Common myeloid progenitor, CD34-positive (primary cell): ENCODE measurements at regions of chr1 and their contacts with region 1.

Region 1: DNA sequence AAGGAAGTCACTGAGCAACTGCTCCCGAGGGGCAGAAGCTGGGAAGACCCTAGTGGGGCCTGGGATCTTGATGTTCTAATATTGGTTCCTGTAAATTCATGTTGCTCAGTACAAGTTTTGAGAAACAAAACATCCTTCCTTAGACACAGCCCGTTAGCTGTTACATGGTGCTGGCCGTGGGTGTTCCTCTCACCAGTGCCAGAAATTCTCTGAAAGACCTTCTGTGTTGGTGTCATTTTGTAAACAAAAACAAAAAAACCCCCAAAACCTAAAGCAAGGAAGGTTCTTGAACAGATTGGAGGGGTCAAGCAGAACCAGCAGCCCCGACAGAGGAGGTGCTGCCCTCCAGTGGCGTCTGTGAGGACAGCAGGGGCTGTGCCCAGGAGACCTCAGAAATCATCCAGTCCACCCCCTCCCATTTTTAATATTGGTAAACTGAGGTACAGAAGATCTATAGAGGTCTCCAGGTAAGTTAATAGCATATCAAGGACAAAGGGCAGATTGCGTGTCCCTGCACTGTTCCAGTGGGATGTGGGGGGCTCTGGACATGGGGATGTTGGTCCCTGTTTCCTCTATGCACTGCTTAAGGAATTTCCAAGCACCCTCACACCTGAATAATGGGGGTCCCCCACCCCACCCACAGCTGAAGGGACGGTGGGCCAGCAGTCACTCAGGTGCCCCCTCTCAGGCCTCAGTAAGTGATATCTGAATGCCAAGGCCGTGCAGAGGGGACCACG is 38.2 kb downstream of the SLC2A7 start:
- DNase-seq: peak; percentile 38 to 63 (median 45)
- H3K4me3 ChIP-seq: peak overlapping the region in 2 of 7 experiments; percentile 11 to 13
- H3K27ac ChIP-seq: no peak overlapping the region
- H3K4me1 ChIP-seq: peaks cover 4 to 17% (median 8%) of the 10 kb centered on the region in 4 experiments
- H3K27me3 ChIP-seq: no peaks in the 10 kb centered on the region

Region 2: DNA sequence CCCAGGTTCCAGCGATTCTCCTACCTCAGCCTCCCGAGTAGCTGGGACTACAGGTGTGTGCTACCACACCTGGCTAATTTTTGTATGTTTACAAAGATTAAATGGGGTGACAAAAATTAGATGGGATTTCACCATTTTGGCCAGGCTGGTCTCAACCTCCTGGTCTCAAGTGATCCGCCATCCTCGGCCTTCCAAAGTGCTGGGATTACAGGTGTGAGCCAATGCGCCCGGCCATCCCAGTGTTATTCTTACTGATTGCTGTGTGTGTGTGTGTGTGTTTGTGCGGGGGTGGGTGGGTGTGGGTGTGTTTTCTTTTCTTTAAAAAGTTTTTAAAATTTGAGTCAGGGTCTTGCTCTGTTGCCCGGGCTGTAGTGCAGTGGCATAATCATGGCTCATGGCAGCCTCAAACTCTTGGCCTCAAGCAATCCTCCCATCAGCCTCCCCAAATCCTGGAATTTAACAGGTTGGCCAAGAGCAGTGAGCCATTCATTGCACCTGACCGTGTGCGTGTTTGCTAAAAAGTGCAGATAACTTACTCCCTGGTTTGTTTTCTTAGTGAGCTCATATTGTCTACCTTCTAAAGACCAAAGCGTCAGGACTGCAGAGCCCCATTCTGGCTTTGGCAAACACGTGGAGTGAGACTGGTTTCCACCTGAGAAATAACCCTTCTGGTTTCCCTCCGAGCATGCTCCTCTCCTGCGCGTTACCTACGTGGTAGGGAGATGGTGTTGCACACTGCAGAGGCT is 74.8 kb before region 1 on chr1:
- CTCF ChIA-PET with region 1: interaction called, 133 read pairs
- POLR2A ChIA-PET with region 1: interaction called, 5 read pairs
- DNase-seq: no peak
- H3K4me3 ChIP-seq: no peak overlapping the region
- H3K27ac ChIP-seq: no peak overlapping the region
- H3K4me1 ChIP-seq: peaks cover 0 to 1% (median under 1%) of the 10 kb centered on the region in 4 experiments
- H3K27me3 ChIP-seq: no peaks in the 10 kb centered on the region

Region 3: GRCh38 chr1:8926707-8927694 is 61.0 kb before region 1 on chr1:
- CTCF ChIA-PET with region 1: interaction called, 133 read pairs
- POLR2A ChIA-PET with region 1: interaction called, 3 read pairs
- DNase-seq: no peak
- H3K4me3 ChIP-seq: no peak overlapping the region
- H3K27ac ChIP-seq: no peak overlapping the region
- H3K4me1 ChIP-seq: peaks cover 4 to 19% (median 17%) of the 10 kb centered on the region in 4 experiments
- H3K27me3 ChIP-seq: no peaks in the 10 kb centered on the region

Region 4: DNA sequence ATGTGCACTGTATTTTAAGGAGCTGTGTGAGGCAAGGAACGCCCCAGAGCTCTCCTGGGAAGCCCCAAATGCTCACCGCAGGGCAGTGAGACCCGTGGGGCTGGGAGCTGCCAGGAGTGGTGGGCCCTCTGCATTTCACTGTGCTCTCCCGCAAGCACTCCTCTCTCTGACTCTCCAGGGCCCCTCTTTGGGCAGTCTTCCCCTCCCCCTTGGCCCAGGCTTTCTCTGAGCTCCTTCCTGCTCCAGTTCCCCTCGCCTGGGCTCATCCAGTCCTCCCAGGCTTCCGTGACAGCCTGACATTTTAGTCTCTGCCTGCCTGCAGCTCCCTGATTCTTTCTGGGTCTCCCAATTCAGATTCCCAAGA is 44.6 kb before region 1 on chr1:
- CTCF ChIA-PET with region 1: interaction called, 14 read pairs
- POLR2A ChIA-PET with region 1: interaction called, 3 read pairs
- DNase-seq: peak in 1 of 3 donors; percentile 15
- H3K4me3 ChIP-seq: peak overlapping the region in 1 of 7 experiments; percentile 10
- H3K27ac ChIP-seq: no peak overlapping the region
- H3K4me1 ChIP-seq: peaks cover 1 to 63% (median 48%) of the 10 kb centered on the region in 4 experiments
- H3K27me3 ChIP-seq: no peaks in the 10 kb centered on the region

Region 5: DNA sequence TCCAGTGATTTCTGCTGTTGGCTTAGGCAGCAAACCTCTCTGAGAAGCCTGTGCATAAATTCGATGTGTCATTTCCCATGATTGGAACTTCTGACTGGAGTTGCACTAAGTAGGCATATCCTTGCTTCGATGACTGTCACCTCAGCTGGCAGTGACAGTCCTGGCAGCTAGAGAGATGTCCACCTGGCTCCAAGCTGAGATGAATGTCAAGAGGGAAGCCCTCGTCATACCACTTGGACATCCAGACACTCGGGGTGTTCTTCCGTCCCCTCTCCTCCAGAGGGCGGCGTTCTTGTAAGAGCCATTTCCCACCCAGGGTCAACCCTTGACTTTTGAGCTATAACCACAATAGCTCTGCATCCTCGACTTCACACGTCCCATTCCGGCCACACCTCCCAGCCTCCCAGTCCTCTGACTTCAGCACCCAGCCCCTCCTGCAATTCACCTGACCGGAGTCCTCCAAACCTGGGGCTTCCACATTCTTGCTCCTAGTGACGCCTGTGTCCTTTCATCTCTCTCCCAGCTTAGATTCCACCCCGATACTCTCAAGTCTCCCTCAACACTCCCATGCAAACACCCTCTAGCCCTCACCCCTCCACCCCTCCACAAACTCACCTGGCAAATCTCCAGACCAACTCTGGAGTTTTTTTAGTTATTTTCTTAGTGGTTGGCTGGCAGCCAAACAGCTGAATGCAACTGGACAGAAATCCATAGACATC is 25.1 kb before region 1 on chr1:
- CTCF ChIA-PET with region 1: interaction called, 28 read pairs
- POLR2A ChIA-PET with region 1: no interaction called
- DNase-seq: peak; percentile 58 to 66 (median 61)
- H3K4me3 ChIP-seq: no peak overlapping the region
- H3K27ac ChIP-seq: no peak overlapping the region
- H3K4me1 ChIP-seq: peaks cover 0 to 9% (median 6%) of the 10 kb centered on the region in 4 experiments
- H3K27me3 ChIP-seq: no peaks in the 10 kb centered on the region

Region 6: DNA sequence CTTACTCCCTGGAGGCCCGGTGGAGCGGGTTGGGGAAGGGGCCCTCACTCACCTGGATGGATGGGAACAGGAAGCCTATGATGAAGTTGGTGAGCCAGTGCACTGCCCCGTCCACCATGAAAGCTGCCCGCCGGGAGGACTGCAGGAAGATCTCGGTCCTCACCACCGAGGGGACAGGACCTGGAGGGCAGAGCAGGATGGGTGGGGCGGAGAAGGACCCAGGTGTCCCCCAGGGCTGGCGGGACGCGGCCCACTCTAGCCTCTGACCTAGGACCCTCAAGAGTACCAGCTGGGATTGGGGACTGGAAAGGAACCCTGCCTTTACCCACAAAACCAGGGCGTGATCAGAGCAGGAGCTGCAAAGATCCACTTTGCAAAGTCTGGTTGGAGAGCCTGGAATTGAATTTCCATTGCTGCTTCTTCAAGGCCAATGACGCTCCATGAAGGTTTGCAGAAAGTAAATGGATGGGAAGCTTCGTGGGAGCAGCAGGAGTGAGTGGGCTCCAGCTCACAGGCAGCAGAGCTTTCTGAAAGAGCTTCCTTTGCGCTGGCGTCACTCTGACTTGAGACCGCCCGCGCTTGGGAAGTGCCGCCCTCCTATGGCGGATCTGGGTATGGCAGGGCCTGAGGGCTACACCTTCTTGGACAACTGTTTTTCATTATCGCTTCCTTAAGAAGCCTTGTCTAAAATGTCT is 16.8 kb after region 1 on chr1:
- CTCF ChIA-PET with region 1: interaction called, 10 read pairs
- POLR2A ChIA-PET with region 1: no interaction called
- DNase-seq: peak; percentile 79 to 88 (median 83)
- H3K4me3 ChIP-seq: peak overlapping the region in 1 of 7 experiments; percentile 1
- H3K27ac ChIP-seq: no peak overlapping the region
- H3K4me1 ChIP-seq: peaks cover 0 to 17% (median 11%) of the 10 kb centered on the region in 4 experiments
- H3K27me3 ChIP-seq: no peaks in the 10 kb centered on the region